Body of pancreas (tissue), 4 donors: ENCODE measurements at regions of chr1 and their contacts with region 1.

Region 1: DNA sequence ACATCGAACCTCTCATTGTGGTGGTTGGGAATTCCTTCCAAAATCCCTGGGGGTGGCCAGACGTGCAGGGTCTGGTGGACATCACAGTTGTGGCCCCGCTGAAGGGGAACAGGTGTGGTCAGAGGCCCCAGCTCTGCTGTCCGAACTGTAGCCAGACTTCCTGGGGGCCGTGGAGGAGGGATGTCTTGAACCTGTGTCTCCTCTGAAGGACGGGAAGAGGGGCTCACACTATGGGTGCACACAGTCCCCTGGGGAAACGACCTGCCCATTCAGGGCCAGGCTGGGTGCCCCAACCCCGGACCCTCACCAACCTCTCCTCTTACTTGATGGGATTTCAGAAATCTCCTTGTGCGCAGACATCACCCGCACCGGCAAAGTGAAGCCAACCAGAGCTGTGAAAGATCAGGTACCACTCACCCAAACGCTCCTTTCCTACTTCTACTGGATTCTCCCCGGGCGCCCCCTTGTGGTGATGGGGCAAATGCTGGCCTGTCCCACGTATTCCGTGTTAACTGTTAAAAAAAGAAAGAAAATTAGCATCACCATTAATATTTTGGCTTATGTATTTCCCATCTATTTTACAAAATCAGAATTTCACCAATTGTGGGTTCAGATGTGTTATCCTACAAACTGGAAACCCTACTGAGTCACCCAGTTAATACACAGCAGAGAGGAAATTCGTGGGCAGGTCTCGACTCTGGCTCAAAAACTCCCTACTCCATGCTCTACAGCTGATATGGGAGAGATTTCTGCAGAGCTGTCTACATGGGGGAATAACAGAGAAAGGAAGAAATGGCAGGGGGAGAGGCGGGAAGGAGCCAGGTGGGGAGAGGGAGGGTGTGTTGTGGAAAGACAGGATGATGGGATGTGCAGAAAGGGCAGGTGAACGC is 28.1 kb downstream of the PADI4 start:
- DNase-seq: peak; percentile 69 to 80 (median 75)
- ATAC-seq: peak; percentile 70
- H3K4me3 ChIP-seq: no peak overlapping the region
- H3K27ac ChIP-seq: no peak overlapping the region
- H3K4me1 ChIP-seq: no peaks in the 10 kb centered on the region
- H3K27me3 ChIP-seq: no peaks in the 10 kb centered on the region
- CTCF ChIP-seq: peak; percentile 63 to 89 (median 76)
- POLR2A ChIP-seq: no peak

Region 2: GRCh38 chr1:17125756-17126237 is 210.3 kb before region 1 on chr1:
- intact Hi-C with region 1: loop called (anchors 10 kb)
- DNase-seq: peak; percentile 90 to 94 (median 91)
- ATAC-seq: peak; percentile 84
- H3K4me3 ChIP-seq: no peak overlapping the region
- H3K27ac ChIP-seq: no peak overlapping the region
- H3K4me1 ChIP-seq: peaks cover 3% of the 10 kb centered on the region
- H3K27me3 ChIP-seq: no peaks in the 10 kb centered on the region
- CTCF ChIP-seq: peak; percentile 93 to 97 (median 95)
- POLR2A ChIP-seq: no peak